GM18951 (cell line): ENCODE measurements at regions of chr5 and their contacts with region 1.

Region 1: GRCh38 chr5:73792687-73793320 is 166.8 kb downstream of the ARHGEF28 start:
- POLR2A ChIP-seq: no peak

Region 2: GRCh38 chr5:73515223-73515622 is 277.6 kb before region 1 on chr5:
- in situ Hi-C with region 1: no loop called
- POLR2A ChIP-seq: no peak

Region 3: DNA sequence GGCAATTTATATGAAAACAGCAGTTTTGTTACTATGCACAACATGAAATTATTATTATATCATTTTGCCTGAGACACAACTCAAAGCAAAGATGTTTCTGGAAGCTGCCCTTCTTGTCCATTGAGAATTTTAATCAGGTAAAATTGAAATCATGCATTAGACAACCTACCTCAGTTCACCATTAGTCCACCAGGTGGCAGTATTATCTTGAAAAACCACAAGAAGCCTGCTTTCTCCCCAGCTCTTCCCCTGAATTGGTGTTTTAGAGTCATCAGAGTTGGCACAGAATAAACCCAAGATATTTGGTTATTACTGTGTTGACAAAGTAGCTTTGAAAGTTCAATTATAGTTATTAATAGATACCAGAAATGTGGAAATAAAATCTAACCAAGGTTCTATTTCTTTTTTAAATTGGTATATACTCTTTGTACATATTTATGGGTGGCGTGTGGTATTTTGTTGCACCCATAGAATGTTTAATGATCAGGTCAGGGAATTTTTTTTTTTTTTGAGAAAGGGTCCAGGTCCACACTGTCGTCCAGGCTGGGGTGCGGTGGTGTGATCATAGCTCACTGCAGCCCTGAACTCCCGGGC is 201.6 kb before region 1 on chr5:
- in situ Hi-C with region 1: loop called (anchors 5 kb)
- POLR2A ChIP-seq: no peak

Region 4: DNA sequence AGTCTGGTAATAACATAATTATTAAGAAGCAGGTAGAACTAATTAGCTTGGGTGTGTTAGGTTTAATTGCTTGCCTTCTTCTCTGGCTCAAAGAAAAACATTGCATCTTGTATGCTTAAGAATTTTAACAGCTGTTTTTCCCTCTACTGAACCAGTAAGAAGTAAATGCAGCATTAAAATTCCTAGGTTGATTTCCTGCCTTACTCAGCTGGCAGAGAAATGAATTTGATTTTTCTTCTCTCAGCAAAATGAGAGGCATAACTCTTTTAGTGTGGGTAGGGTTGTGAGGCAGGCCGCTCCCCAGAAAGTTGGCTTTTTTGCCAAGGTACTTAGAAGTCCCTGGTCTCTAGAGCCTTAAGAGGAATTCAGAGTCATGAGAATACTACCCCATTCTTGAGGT is 135.7 kb after region 1 on chr5:
- in situ Hi-C with region 1: no loop called
- POLR2A ChIP-seq: no peak

Region 5: GRCh38 chr5:74212336-74212735 is 419.5 kb after region 1 on chr5:
- in situ Hi-C with region 1: no loop called
- POLR2A ChIP-seq: no peak